ENCODE measurements at regions of chr5 and their contacts with region 1.

Region 1: GRCh38 chr5:65925601-65926275 is 637 bp upstream of the ERBIN start:
- DNase-seq: peak; percentile 74
- H3K4me3 Mint-ChIP-seq: peak overlapping the region; percentile 88
- H3K27ac Mint-ChIP-seq: peak overlapping the region; percentile 92
- H3K4me1 Mint-ChIP-seq: peaks cover 42% of the 10 kb centered on the region
- H3K27me3 Mint-ChIP-seq: peaks cover 22% of the 10 kb centered on the region

Region 2: DNA sequence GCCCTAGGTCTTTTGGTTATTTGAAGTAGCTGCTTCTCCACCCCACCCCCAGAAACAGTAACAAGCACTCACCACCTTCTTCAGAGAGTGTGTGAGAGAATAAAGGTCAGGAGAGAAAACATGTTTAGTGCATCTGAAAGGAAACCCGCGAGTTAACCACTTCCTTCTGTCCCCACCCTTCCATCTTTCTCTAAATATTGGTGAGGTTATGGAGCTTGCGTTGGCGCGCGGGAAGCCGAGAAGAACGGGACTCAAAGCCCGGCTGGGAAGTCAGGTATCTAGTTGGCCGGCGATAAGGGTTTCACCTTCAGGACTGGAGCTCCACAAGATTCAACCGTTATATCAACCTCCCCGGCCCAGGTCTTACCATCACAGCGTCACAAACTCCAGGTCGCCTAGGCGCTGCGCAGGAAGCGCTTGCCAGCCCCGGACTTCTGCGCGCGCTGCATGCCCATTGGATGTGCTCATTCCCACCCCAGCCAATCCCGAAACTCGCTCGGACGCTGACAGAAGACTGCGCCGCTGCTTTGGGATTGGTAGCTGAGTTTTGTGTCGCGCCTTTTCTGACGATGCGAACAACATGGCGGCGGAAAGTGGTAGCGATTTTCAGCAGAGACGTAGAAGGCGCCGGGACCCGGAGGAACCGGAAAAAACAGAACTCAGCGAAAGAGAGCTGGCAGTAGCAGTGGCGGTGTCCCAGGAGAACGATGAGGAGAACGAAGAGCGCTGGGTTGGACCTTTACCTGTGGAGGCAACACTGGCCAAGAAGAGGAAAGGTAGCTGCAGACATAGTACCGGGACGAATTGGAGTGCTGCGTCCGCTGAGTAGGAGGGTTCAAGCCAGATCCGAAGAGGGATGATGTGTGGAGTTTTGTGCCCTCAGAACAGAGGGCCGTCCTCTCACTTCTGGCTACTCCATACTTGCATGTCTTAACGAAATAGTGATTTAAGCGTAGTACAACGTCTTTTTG is 362.7 kb before region 1 on chr5 and contains the starts of genes CENPK and PPWD1:
- intact Hi-C with region 1: loop called (anchors 1 kb)
- DNase-seq: peak; percentile 94
- H3K4me3 Mint-ChIP-seq: peak within 1 kb of the TSS; percentile 95
- H3K27ac Mint-ChIP-seq: peak within 1 kb of the TSS; percentile 99
- H3K4me1 Mint-ChIP-seq: peaks cover 53% of the 10 kb centered on the region
- H3K27me3 Mint-ChIP-seq: no peaks in the 10 kb centered on the region
- total RNA-seq, gene CENPK: 81.0 and 85.1 TPM in 2 replicates
- total RNA-seq, gene PPWD1: 63.6 and 65.4 TPM in 2 replicates

Region 3: GRCh38 chr5:65742565-65743231 is 183.0 kb before region 1 on chr5:
- intact Hi-C with region 1: loop called (anchors 1 kb)
- DNase-seq: no peak
- H3K4me3 Mint-ChIP-seq: no peak overlapping the region
- H3K27ac Mint-ChIP-seq: no peak overlapping the region
- H3K4me1 Mint-ChIP-seq: peaks cover 16% of the 10 kb centered on the region
- H3K27me3 Mint-ChIP-seq: peaks cover 3% of the 10 kb centered on the region

Region 4: GRCh38 chr5:65943771-65944170 is 18.0 kb after region 1 on chr5:
- intact Hi-C with region 1: loop called (anchors 2 kb)
- DNase-seq: no peak
- H3K4me3 Mint-ChIP-seq: no peak overlapping the region
- H3K27ac Mint-ChIP-seq: no peak overlapping the region
- H3K4me1 Mint-ChIP-seq: peaks cover 5% of the 10 kb centered on the region
- H3K27me3 Mint-ChIP-seq: no peaks in the 10 kb centered on the region

Region 5: DNA sequence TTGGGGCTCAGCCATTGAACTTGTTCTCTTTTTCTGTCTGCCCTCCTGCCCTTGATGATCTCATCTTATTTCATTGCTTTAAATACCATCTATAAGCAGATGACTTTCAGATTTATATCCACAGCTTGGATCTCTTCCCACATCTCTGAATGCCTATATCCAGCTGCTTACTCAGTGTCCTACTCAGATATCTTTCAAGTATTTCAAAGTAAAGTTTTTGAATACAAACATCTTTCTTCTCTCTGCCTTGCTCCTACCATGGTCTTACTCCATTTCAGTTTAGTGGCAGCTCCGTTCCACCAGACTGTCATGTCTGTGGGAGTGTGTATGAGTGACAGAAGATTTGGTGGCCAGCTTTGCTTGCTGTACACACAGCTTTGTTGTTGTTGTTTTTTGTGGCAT is 60.3 kb after region 1 on chr5:
- intact Hi-C with region 1: no loop called
- DNase-seq: no peak
- H3K4me3 Mint-ChIP-seq: no peak overlapping the region
- H3K27ac Mint-ChIP-seq: no peak overlapping the region
- H3K4me1 Mint-ChIP-seq: peaks cover 11% of the 10 kb centered on the region
- H3K27me3 Mint-ChIP-seq: no peaks in the 10 kb centered on the region

Region 6: GRCh38 chr5:66144074-66144833 is 218.5 kb after region 1 on chr5 and contains the start of gene SREK1:
- intact Hi-C with region 1: loop called (anchors 1 kb)
- DNase-seq: peak; percentile 84
- H3K4me3 Mint-ChIP-seq: peak within 1 kb of the TSS; percentile 96
- H3K27ac Mint-ChIP-seq: peak within 1 kb of the TSS; percentile 99
- H3K4me1 Mint-ChIP-seq: peaks cover 47% of the 10 kb centered on the region
- H3K27me3 Mint-ChIP-seq: peaks cover 2% of the 10 kb centered on the region
- total RNA-seq, gene SREK1: 72.0 and 76.7 TPM in 2 replicates

Region 7: GRCh38 chr5:66840511-66841013 is 914.8 kb after region 1 on chr5:
- intact Hi-C with region 1: loop called (anchors 5 kb)
- DNase-seq: peak; percentile 53
- H3K4me3 Mint-ChIP-seq: peak overlapping the region; percentile 38
- H3K27ac Mint-ChIP-seq: peak overlapping the region; percentile 81
- H3K4me1 Mint-ChIP-seq: peaks cover 81% of the 10 kb centered on the region
- H3K27me3 Mint-ChIP-seq: no peaks in the 10 kb centered on the region